HepG2 (cell line): ENCODE measurements at regions of chr10 and their contacts with region 1.

Region 1: DNA sequence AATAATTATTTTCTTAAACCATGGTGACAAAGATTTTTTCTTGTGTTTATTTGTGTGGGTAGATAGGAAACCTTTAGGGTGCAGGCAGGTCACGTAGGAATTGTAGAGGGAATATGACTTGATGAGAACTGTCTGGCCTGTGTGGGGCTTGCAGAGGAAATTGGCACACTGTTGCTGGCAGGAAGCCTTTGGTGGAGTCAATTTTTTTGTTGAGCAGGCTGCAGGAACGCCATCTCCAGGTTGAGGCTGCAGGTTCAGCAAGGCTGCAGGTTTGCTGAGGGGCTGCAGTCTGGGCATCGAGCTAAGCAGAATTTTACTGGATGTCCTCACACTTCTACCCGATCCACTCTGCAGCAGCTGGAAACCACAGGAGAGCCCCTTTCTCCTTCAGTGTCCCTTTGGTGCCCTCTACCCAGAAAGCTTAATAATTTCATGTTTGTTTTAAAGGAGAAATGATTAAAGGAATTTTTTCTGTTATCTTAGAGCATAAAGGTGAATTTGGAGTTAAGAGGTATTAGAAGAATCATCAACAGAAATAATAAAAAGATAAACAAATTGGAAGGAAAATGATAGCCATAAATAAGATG is 37.0 kb downstream of the TBC1D12 start:
- DNase-seq: no peak
- ATAC-seq: no peak
- H3K4me3 ChIP-seq: no peak overlapping the region
- H3K27ac ChIP-seq: no peak overlapping the region
- H3K4me1 ChIP-seq: no peaks in the 10 kb centered on the region
- H3K27me3 ChIP-seq: no peaks in the 10 kb centered on the region
- CTCF ChIP-seq: no peak
- EP300 ChIP-seq: no peak
- POLR2A ChIP-seq: no peak
- RAD21 ChIP-seq: no peak

Region 2: GRCh38 chr10:93916257-93917063 is 522.9 kb before region 1 on chr10:
- CTCF ChIA-PET with region 1: no interaction called
- POLR2A ChIA-PET with region 1: no interaction called
- in situ Hi-C with region 1: loop called (anchors 25 kb)
- intact Hi-C with region 1: no loop called
- DNase-seq: peak; percentile 34
- ATAC-seq: peak; percentile 77
- H3K4me3 ChIP-seq: peak overlapping the region in 2 of 3 experiments; percentile 9 to 42; a peak in 2 of 6 replicates
- H3K27ac ChIP-seq: no peak overlapping the region
- H3K4me1 ChIP-seq: peaks cover 10% of the 10 kb centered on the region; the same call in 1 of the 2 replicates
- H3K27me3 ChIP-seq: no peaks in the 10 kb centered on the region; a peak in 1 of 5 replicates
- CTCF ChIP-seq: peak; percentile 68
- EP300 ChIP-seq: no peak
- POLR2A ChIP-seq: no peak
- RAD21 ChIP-seq: no peak

Region 3: GRCh38 chr10:94279835-94280709 is 159.3 kb before region 1 on chr10:
- CTCF ChIA-PET with region 1: interaction called, 17 read pairs
- POLR2A ChIA-PET with region 1: no interaction called
- in situ Hi-C with region 1: loop called (anchors 10 kb)
- intact Hi-C with region 1: loop called (anchors 1 kb)
- DNase-seq: peak; percentile 29
- ATAC-seq: peak; percentile 91
- H3K4me3 ChIP-seq: no peak overlapping the region
- H3K27ac ChIP-seq: no peak overlapping the region
- H3K4me1 ChIP-seq: no peaks in the 10 kb centered on the region
- H3K27me3 ChIP-seq: no peaks in the 10 kb centered on the region
- CTCF ChIP-seq: peak; percentile 89
- EP300 ChIP-seq: no peak
- POLR2A ChIP-seq: no peak
- RAD21 ChIP-seq: peak; percentile 78

Region 4: DNA sequence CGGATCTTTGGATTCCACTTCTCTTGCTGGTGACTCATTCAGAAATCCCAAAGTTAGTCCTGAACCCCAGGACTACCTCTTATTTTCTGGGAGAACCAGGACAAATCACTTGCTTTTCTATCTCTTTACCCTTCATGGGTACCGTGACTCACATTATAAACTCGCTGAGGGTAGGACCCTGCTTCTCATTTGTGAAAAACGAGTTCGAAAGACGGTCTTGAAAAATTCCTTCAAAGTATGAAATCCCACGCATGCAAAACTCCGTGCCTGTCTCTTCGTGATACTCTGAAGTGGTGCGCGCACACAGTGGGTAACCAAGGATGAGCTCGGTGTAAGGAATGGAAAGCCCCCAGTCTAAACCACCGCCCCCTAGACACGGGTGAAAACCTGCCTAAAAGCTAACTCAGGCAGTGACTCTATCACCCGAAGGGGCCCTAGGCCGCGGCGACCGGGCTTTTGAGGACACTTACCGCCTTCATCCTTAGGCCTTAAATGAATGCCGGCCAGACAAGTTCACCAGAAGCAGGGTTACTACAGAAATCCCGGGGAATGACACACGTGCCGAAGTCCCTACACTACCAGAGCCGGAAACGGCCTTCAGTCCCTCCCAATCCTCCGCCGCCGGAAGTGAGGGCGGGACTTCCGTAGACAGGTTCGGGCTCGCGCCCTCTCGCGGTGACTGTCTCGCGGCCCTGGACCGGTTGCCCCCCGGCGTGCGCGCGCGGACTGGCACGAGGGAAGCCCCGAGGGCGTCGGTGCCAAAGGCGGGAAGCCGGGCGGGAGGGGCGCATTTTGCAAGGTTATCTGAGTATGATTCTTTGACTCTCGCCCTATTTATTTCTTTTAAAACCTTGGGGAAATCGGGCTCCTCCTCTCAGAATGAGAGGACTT is 76.8 kb before region 1 on chr10 and contains the start of gene NOC3L:
- CTCF ChIA-PET with region 1: no interaction called
- POLR2A ChIA-PET with region 1: no interaction called
- in situ Hi-C with region 1: no loop called
- intact Hi-C with region 1: loop called (anchors 2 kb)
- DNase-seq: peak; percentile 93
- ATAC-seq: peak; percentile 98
- H3K4me3 ChIP-seq: peak within 1 kb of the TSS; percentile 74 to 92 (median 77)
- H3K27ac ChIP-seq: peak within 1 kb of the TSS; percentile 57
- H3K4me1 ChIP-seq: peaks cover 22% of the 10 kb centered on the region
- H3K27me3 ChIP-seq: no peaks in the 10 kb centered on the region; a peak in 2 of 5 replicates
- CTCF ChIP-seq: peak; percentile 96
- EP300 ChIP-seq: 0 out of 4 replicates have a peak, but pooled peaks have one; percentile 30 to 44
- POLR2A ChIP-seq: peak; percentile 86 to 87
- RAD21 ChIP-seq: peak; percentile 71; the same call in 1 of the 2 replicates
- total RNA-seq, gene NOC3L: 36.6 and 51.6 TPM in 2 replicates

Region 5: DNA sequence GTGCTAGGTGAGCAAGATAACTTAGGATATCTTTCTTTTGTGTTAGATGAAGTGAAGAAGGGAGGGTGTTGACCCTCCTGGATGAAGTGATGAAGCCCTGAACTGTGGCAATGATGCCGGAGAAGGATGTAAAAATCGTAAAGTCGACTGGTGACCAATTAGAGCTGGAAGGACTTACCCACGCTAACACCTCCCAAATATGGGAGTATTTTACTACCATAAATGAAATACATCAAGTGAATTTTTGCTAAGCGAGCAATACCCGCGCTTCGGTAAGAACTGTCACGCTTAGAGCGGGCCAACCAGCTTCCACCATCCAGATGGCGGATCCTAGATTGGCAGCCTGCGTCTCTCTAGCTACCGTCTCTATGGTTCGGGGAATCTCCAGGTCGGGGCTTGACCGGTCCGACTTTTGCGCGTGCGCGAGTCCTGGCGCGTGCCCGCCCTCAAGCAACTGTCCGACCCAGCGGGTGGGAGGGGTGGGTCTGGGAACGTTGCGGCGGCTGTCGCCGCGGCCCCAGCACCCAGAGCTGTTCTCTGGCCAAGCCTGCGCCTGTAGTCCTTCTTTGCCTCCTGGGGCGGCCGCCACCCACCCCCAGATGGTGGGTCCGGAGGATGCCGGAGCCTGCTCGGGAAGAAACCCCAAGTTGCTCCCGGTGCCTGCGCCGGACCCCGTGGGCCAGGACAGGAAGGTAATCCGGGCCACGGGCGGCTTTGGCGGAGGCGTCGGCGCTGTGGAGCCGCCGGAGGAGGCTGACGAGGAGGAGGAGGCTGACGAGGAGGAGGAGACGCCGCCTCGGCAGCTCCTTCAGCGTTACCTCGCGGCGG is 37.1 kb before region 1 on chr10 and contains the start of gene TBC1D12:
- CTCF ChIA-PET with region 1: no interaction called
- POLR2A ChIA-PET with region 1: interaction called, 3 read pairs
- in situ Hi-C with region 1: no loop called
- intact Hi-C with region 1: loop called (anchors 5 kb)
- DNase-seq: peak; percentile 93
- ATAC-seq: peak; percentile 84
- H3K4me3 ChIP-seq: peak within 1 kb of the TSS; percentile 92 to 97 (median 95)
- H3K27ac ChIP-seq: peak within 1 kb of the TSS; percentile 92
- H3K4me1 ChIP-seq: peaks cover 55% of the 10 kb centered on the region
- H3K27me3 ChIP-seq: no peaks in the 10 kb centered on the region; a peak in 1 of 5 replicates
- CTCF ChIP-seq: peak; percentile 34
- EP300 ChIP-seq: peak in 1 of 2 experiments; percentile 27; a peak in 1 of 4 replicates
- POLR2A ChIP-seq: peak; percentile 70 to 80
- RAD21 ChIP-seq: no peak
- total RNA-seq, gene TBC1D12: 6.2 and 7.2 TPM in 2 replicates